Activated B cell treated with CpG ODN at 0.5 μM for 24 hours (primary cell): ENCODE measurements at regions of chr13 and their contacts with region 1.

Region 1: DNA sequence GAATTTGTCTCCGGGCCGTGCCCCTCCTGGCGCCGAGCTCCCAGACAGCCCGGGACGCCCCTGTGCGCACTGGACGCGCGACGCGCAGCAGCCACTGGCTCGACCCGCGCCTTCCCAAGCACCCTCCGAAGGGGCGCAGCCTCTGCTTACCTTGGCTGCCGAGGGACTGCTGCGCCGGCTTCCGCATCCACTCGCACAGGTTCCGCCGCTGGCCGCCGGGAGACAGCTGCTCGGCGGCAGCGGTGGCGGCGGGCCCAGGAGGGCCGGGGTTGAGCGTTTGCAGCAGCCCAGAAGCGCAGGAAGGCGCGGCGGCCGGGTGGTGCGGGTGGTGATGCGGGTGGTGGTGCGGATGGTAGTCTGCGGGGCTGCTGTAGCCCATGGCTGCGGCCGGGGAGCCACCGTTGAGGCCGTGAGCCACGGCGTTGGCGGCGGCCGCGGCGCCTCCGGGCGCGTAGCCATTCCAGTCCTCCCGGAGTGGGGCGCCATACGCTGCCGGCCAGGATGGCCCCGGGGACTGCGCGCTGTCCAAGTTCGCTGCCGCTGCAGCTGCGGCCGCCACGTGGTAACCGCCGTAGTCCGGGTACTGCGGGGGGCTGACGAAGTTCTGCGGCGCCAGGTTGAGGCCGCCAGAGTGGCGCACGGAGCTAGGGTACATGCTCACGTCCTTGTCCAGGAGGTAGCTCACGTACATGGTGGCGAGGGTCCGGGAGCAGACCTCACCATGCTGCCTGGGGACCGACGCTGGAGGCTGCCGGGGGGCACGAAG is 616 bp downstream of the CDX2 start:
- DNase-seq: no peak
- ATAC-seq: no peak
- H3K4me3 Mint-ChIP-seq: peak overlapping the region; percentile 28
- H3K27ac Mint-ChIP-seq: no peak overlapping the region
- H3K4me1 Mint-ChIP-seq: peaks cover 36% of the 10 kb centered on the region
- H3K27me3 Mint-ChIP-seq: peaks cover 70% of the 10 kb centered on the region
- CTCF ChIP-seq: no peak

Region 2: DNA sequence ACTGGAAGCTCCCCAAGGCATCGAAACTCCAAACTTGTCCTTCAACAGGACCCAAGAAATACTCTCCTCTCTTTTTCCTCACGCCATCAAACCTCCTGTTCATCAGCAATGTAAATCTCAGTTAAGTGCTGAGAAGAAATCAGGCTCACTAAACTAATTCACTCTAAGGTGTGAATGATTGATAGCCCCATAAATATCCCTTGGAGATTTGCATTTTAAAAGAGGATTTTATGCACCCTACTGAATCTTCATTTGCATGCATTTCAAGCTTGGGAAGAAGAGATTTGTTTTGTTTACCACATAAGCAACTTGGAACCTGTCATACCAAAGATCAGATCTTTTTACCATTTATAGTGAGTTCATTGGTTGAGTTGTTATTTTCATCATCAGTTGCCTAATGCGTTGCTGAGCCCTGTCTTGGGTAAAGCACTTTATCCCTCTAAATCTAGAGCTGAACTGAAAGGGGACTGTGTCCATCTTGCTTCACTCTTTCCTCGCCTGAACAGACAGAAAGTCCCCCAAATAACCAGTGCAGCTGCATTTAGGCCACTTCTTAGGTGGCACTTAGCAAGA is 216.5 kb before region 1 on chr13:
- CTCF ChIA-PET with region 1: no interaction called
- POLR2A ChIA-PET with region 1: no interaction called
- intact Hi-C with region 1: no loop called
- DNase-seq: no peak
- ATAC-seq: no peak
- H3K4me3 Mint-ChIP-seq: no peak overlapping the region
- H3K27ac Mint-ChIP-seq: no peak overlapping the region
- H3K4me1 Mint-ChIP-seq: no peaks in the 10 kb centered on the region
- H3K27me3 Mint-ChIP-seq: peaks cover 18% of the 10 kb centered on the region
- CTCF ChIP-seq: no peak

Region 3: DNA sequence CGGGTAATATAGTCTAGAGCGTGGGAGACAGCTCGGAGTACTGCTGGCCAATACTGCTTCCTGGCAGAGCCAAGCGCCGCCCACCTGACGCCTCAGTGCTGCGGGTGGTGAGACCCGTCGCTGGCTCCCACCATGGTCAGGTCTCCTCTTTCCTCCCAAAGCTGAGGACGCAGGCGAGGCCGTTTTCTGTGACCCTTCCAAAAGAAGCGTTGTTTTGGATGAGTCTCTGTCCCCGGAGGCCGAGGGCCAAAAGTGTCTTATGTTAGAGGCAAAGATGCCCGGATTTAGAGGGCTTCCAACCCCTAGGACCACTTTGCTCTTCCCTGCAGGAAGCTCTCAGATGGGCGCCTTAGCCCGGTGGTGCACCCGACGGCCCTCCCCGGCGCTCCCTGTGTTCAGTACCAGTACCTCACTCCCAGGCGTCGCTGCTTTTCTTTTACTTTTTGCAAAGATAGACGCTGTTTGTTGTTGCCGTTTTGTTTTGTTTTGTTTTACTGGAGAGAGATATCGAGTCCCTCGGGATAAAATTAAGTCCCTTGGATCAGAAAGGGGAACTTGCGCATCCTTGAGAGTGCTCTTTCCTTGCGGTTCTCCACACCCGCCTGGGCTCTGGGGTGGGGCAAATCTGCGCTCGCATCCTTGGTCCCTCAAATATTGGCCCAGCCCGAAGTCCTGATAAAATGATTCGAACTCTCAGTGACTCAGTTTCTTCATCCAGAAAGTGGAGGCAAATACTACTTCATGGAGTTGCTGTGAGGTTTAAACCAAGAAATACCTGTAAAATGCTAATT is 41.7 kb before region 1 on chr13:
- CTCF ChIA-PET with region 1: no interaction called
- POLR2A ChIA-PET with region 1: no interaction called
- intact Hi-C with region 1: loop called (anchors 2 kb)
- DNase-seq: no peak
- ATAC-seq: no peak
- H3K4me3 Mint-ChIP-seq: peak overlapping the region; percentile 35
- H3K27ac Mint-ChIP-seq: no peak overlapping the region
- H3K4me1 Mint-ChIP-seq: peaks cover 23% of the 10 kb centered on the region
- H3K27me3 Mint-ChIP-seq: peaks cover 81% of the 10 kb centered on the region
- CTCF ChIP-seq: no peak